ENCODE measurements at regions of chr5 and their contacts with region 1.

Region 1: DNA sequence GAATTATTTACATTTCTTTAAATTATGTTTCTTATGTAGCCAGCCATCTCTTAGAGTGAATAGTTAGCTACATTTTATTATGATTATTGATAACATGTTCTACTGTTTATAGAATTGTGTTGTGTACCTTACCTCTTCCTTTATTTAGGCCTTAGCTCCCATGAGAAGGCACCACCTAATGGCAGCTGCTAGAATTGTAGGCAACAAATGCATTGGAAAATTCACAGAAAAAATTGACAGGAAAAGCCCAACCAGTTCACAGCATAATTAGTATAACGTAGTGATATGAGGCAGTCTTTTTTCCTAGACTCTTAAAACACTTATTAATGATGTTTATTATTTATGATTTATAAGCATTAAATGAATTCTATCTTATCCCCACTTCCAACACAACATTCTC is 175.8 kb downstream of the WDR70 start:
- DNase-seq: peak in 1 of 3 donors; percentile 28
- H3K4me3 ChIP-seq: no peak overlapping the region
- H3K27ac ChIP-seq: no peak overlapping the region
- H3K4me1 ChIP-seq: peaks cover 10 to 28% (median 26%) of the 10 kb centered on the region in 4 experiments
- H3K27me3 ChIP-seq: no peaks in the 10 kb centered on the region

Region 2: DNA sequence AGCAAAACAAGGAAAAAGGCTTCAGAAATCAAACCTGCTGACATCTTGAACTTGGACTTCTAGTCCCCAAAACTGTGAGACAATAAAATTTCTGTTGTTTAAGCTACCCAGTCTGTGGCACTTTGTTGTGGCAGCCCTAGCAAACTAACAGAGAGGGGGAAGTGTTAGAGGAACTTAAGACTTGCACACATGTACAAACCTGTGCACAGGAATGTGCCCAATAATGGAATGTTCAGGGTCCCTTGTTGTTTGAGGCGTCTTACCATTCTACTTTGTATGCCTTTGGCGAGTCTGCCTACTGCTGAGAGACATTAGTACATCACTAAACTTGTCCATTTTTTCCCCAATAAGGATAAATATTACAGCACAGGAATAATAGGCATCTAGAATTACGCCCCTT is 15.5 kb before region 1 on chr5:
- CTCF ChIA-PET with region 1: interaction called, 11 read pairs
- POLR2A ChIA-PET with region 1: no interaction called
- DNase-seq: no peak
- H3K4me3 ChIP-seq: no peak overlapping the region
- H3K27ac ChIP-seq: no peak overlapping the region
- H3K4me1 ChIP-seq: peaks cover 0 to 6% (median 0%) of the 10 kb centered on the region in 4 experiments
- H3K27me3 ChIP-seq: no peaks in the 10 kb centered on the region